ENCODE measurements at regions of chr18 and their contacts with region 1.

Region 1: DNA sequence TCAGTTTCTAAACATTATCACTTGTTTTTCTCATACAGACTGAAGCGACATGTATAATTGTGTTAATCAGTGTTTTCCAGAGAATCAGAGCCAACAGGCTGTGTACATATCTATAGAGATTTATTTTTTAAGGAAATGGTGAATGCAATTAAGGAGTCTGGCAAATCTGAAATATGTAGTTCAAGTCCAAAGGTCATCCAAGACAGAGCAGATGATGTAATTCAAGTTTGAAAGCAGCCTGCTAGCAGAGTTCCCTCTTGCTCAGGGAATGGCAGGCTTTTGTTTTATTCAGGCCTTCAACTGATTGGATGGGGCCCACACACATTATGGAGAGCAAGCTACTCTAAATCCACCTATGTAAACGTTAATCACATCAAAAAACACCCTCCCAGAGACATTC is 282.6 kb downstream of the CBLN2 start:
- DNase-seq: no peak
- H3K4me3 ChIP-seq: no peak overlapping the region
- H3K27ac ChIP-seq: no peak overlapping the region
- H3K4me1 ChIP-seq: no peaks in the 10 kb centered on the region
- H3K27me3 ChIP-seq: no peaks in the 10 kb centered on the region
- CTCF ChIP-seq: no peak
- POLR2A ChIP-seq: no peak

Region 2: GRCh38 chr18:72316497-72316896 is 54.9 kb after region 1 on chr18:
- intact Hi-C with region 1: loop called (anchors 10 kb)
- DNase-seq: no peak
- H3K4me3 ChIP-seq: no peak overlapping the region
- H3K27ac ChIP-seq: no peak overlapping the region
- H3K4me1 ChIP-seq: no peaks in the 10 kb centered on the region
- H3K27me3 ChIP-seq: no peaks in the 10 kb centered on the region
- CTCF ChIP-seq: no peak
- POLR2A ChIP-seq: no peak

Measured in spleen (tissue), 13 donors.